BJ (cell line): ENCODE measurements at regions of chr11 and their contacts with region 1.

Region 1: DNA sequence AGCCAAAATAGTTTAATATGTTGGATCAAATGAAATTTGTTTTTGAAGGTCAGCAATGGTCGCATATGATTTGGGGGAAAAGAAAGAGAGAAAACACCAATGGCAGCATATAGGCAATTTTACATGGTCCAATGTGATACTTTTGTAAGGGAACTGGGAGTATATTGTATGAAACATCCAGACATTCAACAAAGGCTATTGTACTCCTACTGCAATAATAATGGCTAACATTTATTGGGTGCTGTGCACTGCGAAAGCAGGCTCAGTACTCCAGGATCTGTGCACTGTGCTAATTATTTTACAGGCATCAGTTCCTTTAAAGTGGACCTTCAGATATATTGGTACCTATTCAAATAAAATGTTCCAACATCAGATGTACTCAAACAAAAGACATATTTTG is 5.9 kb upstream of the OR10V1 start:
- DNase-seq: no peak
- H3K4me3 ChIP-seq: no peak overlapping the region
- H3K27me3 ChIP-seq: no peaks in the 10 kb centered on the region; the same call in 1 of the 2 replicates
- CTCF ChIP-seq: no peak

Region 2: DNA sequence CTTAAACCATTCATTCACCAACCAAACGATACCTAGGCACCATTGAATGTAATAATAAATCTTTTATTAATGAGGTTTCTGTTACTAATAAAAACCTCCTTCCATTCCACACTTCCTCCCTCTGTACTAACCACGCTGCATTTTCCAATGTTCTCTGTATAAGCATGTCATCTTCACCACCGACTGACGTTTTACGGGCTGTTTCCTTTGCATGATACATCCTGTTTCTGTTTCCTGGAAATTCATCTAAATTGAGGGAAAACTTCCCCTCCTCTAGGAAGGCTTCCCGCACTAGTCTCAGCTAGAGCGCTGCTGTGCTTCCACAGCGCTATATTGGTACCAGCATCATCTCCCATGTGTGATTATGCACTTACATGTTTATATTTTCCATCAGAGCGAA is 244.4 kb before region 1 on chr11:
- CTCF ChIA-PET with region 1: no interaction called
- POLR2A ChIA-PET with region 1: no interaction called
- DNase-seq: no peak
- H3K4me3 ChIP-seq: no peak overlapping the region
- H3K27me3 ChIP-seq: no peaks in the 10 kb centered on the region
- CTCF ChIP-seq: no peak

Region 3: GRCh38 chr11:59759900-59760299 is 40.3 kb after region 1 on chr11:
- CTCF ChIA-PET with region 1: no interaction called
- POLR2A ChIA-PET with region 1: interaction called, 15 read pairs
- DNase-seq: no peak
- H3K4me3 ChIP-seq: no peak overlapping the region
- H3K27me3 ChIP-seq: no peaks in the 10 kb centered on the region
- CTCF ChIP-seq: no peak